ENCODE measurements at regions of chr15 and their contacts with region 1.

Region 1: DNA sequence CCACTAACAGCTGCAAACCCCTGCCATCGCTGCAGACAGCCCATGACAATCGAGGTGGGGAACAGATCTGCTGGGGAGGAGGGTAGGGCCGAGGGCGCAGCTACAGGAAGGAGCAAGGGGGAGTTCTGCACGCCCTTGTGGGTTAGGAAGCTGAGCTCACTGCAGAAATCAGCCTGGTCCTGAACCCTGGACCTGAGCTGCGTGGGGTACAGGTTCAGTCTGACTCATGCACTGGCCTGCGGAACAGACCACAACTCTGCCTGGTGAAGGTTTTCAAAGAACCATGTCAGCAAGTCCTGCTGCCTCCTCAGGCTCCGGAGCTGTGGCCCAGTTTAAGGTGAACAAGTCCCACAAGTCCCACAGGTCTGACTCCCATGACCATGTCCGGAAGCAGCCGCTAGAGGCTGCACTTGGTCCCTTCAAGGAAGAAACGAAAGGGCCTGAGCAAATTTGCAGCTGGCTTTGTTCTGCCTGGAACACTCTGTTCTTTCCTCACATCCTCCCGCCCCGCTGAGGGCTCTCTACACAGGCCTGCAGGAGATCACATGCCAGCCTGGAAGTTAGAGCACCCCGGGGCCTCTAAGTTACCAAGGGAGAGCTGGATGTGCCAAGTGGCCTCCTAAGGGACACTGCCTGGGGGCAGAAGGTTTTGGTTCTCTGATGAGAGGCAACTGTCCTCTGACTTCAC is 49.4 kb upstream of the AKAP13 start:
- DNase-seq: peak; percentile 81
- ATAC-seq: peak; percentile 77
- H3K4me3 Mint-ChIP-seq: peak overlapping the region; percentile 80
- H3K27ac Mint-ChIP-seq: peak overlapping the region; percentile 88
- H3K4me1 Mint-ChIP-seq: peaks cover 46% of the 10 kb centered on the region
- H3K27me3 Mint-ChIP-seq: no peaks in the 10 kb centered on the region

Region 2: GRCh38 chr15:85312486-85312885 is 18.6 kb before region 1 on chr15:
- CTCF ChIA-PET with region 1: interaction called, 14 read pairs
- POLR2A ChIA-PET with region 1: interaction called, 3 read pairs
- intact Hi-C with region 1: loop called in 1 of 2 experiments (anchors 2 kb)
- DNase-seq: no peak
- ATAC-seq: no peak
- H3K4me3 Mint-ChIP-seq: no peak overlapping the region
- H3K27ac Mint-ChIP-seq: peak overlapping the region; percentile 3
- H3K4me1 Mint-ChIP-seq: peaks cover 53% of the 10 kb centered on the region
- H3K27me3 Mint-ChIP-seq: no peaks in the 10 kb centered on the region

Region 3: GRCh38 chr15:85354461-85354860 is 23.4 kb after region 1 on chr15:
- CTCF ChIA-PET with region 1: interaction called, 4 read pairs
- POLR2A ChIA-PET with region 1: no interaction called
- intact Hi-C with region 1: loop called in 1 of 2 experiments (anchors 1 kb)
- DNase-seq: no peak
- ATAC-seq: no peak
- H3K4me3 Mint-ChIP-seq: no peak overlapping the region
- H3K27ac Mint-ChIP-seq: no peak overlapping the region
- H3K4me1 Mint-ChIP-seq: peaks cover 10% of the 10 kb centered on the region
- H3K27me3 Mint-ChIP-seq: peaks cover 3% of the 10 kb centered on the region

Region 4: GRCh38 chr15:85504749-85505676 is 174.0 kb after region 1 on chr15:
- CTCF ChIA-PET with region 1: interaction called, 4 read pairs
- POLR2A ChIA-PET with region 1: no interaction called
- intact Hi-C with region 1: loop called in 1 of 2 experiments (anchors 1 kb)
- DNase-seq: peak; percentile 64
- ATAC-seq: no peak
- H3K4me3 Mint-ChIP-seq: no peak overlapping the region
- H3K27ac Mint-ChIP-seq: no peak overlapping the region
- H3K4me1 Mint-ChIP-seq: peaks cover 64% of the 10 kb centered on the region
- H3K27me3 Mint-ChIP-seq: no peaks in the 10 kb centered on the region

Region 5: GRCh38 chr15:86573476-86573875 is 1242.4 kb after region 1 on chr15:
- CTCF ChIA-PET with region 1: no interaction called
- POLR2A ChIA-PET with region 1: no interaction called
- intact Hi-C with region 1: no loop called
- DNase-seq: no peak
- ATAC-seq: no peak
- H3K4me3 Mint-ChIP-seq: no peak overlapping the region
- H3K27ac Mint-ChIP-seq: no peak overlapping the region
- H3K4me1 Mint-ChIP-seq: peaks cover 6% of the 10 kb centered on the region
- H3K27me3 Mint-ChIP-seq: no peaks in the 10 kb centered on the region